Heart right ventricle (tissue), 16 donors: ENCODE measurements at regions of chr4 and their contacts with region 1.

Region 1: GRCh38 chr4:4248029-4248884 is at the start of gene TMEM128:
- DNase-seq: peak; percentile 91 to 94
- ATAC-seq: peak; percentile 96 to 99 (median 98)
- H3K4me3 ChIP-seq: peak within 1 kb of the TSS; percentile 61 to 94 (median 86)
- H3K27ac ChIP-seq: peak within 1 kb of the TSS; percentile 83 to 97 (median 94)
- H3K4me1 ChIP-seq: peaks cover 0 to 24% (median 18%) of the 10 kb centered on the region in 9 donors
- H3K27me3 ChIP-seq: peaks cover 0 to 4% (median 0%) of the 10 kb centered on the region in 7 donors
- CTCF ChIP-seq: peak in 4 of 9 donors; percentile 13 to 28 (median 23)
- total RNA-seq, gene TMEM128: 8.3 to 13.1 (median 10.6) TPM

Region 2: GRCh38 chr4:4334798-4335520 is 86.7 kb after region 1 on chr4:
- intact Hi-C with region 1: loop called in 8 of 10 experiments (anchors 1 to 5 kb)
- DNase-seq: peak; percentile 52 to 66
- ATAC-seq: peak in 5 of 8 donors; percentile 49 to 67 (median 62)
- H3K4me3 ChIP-seq: no peak overlapping the region
- H3K27ac ChIP-seq: no peak overlapping the region
- H3K4me1 ChIP-seq: peaks cover 0 to 23% (median 6%) of the 10 kb centered on the region in 9 donors
- H3K27me3 ChIP-seq: peaks cover 0 to 10% (median 0%) of the 10 kb centered on the region in 7 donors
- CTCF ChIP-seq: peak; percentile 54 to 86 (median 80)

Region 3: DNA sequence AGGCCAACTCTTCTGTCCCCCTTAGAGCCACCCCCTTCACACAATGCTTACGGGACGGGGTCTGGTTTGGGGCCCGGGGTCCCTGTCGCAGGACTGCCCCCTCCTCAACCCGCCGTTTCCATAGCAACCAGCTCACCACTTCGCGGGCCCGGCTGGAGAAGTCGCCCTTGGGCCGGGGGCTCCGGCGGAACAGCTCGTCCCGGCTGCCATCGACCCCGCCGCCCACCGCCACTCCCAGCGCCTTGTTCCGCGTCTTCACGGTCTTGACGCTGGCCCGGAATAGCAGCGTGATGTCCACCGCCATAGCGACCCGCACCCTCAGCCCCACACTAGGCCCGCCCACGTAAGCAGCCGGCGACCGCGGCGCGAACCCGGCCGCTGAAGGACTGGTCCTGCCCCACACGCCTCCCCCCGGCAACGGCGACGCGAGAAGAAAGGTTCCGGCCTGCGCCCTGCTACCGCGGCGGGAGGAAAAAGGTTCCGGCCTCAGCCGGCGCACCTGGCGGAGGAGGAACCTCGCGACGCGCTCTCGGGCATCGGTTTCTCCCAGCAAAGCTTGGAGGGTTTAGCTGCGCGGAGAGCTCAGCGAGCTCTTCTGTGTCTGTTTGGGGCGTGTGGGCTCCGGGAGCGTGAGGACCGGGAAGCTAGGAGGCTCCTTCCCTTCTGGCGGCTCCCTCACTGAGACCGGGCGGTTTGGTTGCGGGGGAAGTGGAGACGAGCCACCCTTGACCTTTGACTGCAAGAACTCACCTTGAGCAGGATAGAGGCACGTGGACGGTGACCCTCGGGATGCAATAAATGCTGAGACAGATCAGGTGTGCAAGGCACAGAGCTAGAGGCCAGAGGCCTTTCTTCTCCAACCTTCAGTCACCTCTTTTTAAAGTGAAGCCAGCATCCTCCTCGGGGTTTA is 293.7 kb after region 1 on chr4 and contains the start of gene STX18:
- intact Hi-C with region 1: loop called in 1 of 10 experiments (anchors 10 kb)
- DNase-seq: peak; percentile 85 to 89
- ATAC-seq: peak; percentile 98 to 99 (median 99)
- H3K4me3 ChIP-seq: peak within 1 kb of the TSS; percentile 77 to 99 (median 92)
- H3K27ac ChIP-seq: peak within 1 kb of the TSS in 9 of 10 donors; percentile 74 to 92 (median 85)
- H3K4me1 ChIP-seq: peaks cover 3 to 39% (median 31%) of the 10 kb centered on the region in 9 donors
- H3K27me3 ChIP-seq: no peaks in the 10 kb centered on the region
- CTCF ChIP-seq: peak in 1 of 9 donors; percentile 16
- total RNA-seq, gene STX18: 13.5 to 22.5 (median 18.0) TPM